HAP-1 (cell line): ENCODE measurements at regions of chr19 and their contacts with region 1.

Region 1: GRCh38 chr19:46487802-46488445 is 7.7 kb downstream of the PNMA8B start:
- DNase-seq: peak; percentile 76 to 90
- H3K4me3 ChIP-seq: peak overlapping the region; percentile 22
- H3K4me1 ChIP-seq: peaks cover 8% of the 10 kb centered on the region
- H3K27me3 ChIP-seq: no peaks in the 10 kb centered on the region

Region 2: DNA sequence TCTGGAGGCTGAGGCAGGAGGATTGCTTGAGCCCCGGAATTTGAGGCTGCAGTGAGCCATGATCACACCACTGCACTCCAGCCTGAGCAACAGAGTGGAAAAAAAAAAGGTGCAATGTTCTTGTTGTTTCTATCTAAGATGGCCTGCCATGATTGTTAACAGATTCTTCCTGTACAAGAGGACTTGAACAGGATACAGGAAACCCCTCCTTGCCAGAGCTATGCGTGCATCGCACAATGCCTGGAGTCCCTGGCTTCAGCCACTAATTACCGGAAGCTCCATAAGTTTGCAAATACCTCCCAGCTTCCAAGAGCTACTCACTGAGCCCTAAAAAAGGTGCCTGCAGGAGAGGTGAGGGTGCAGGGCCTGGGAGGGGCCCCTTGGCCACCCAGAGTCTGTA is 204.2 kb before region 1 on chr19:
- in situ Hi-C with region 1: loop called (anchors 5 kb)
- DNase-seq: no peak
- H3K4me3 ChIP-seq: no peak overlapping the region
- H3K4me1 ChIP-seq: no peaks in the 10 kb centered on the region
- H3K27me3 ChIP-seq: peaks cover 5% of the 10 kb centered on the region

Region 3: DNA sequence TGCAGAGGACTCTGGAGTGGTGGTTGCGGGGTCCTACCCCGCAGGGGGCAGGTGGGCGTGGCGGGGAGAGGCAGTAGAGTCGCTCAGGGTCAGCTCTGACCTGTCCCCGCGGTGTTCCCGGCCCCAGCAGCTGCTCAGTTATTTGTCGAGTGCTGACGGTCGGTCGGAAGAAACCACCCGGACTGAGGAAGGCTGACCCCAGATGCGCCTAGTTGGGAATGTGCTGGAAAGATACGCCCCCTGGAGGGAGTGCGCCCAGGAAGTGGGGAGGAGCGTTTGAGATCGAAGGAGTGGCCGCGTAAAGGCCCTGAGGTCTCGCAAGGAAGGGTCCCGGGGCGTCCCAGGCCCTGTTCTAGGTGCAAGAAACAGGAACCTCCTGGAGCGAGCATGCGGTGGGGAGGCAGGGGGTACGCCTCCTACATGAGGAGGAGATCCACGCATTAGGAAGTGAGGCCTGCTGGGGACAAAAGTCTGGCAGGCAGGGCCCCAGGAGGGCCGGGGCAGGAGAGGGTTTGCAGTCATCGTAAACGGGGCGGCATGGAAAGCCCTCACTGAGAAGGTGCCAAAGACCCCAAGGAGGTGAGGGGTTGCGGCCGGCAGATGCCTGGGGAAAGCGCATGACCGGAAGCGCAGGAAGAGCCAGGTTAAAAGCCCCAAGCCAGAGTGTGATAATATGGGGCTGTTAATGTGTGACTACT is 83.7 kb before region 1 on chr19:
- in situ Hi-C with region 1: loop called (anchors 5 kb)
- DNase-seq: peak; percentile 66 to 89
- H3K4me3 ChIP-seq: peak overlapping the region; percentile 40
- H3K4me1 ChIP-seq: peaks cover 17% of the 10 kb centered on the region
- H3K27me3 ChIP-seq: no peaks in the 10 kb centered on the region